ENCODE measurements at regions of chr11 and their contacts with region 1.

Region 1: GRCh38 chr11:125111343-125112207 is at the start of gene TMEM218:
- DNase-seq: peak; percentile 91 to 97 (median 95)
- H3K4me3 ChIP-seq: peak within 1 kb of the TSS; percentile 80
- H3K4me3 Mint-ChIP-seq: peak within 1 kb of the TSS; percentile 90 to 100 (median 94)
- H3K27ac ChIP-seq: peak within 1 kb of the TSS; percentile 74
- H3K27ac Mint-ChIP-seq: peak within 1 kb of the TSS; percentile 82 to 99 (median 96)
- H3K4me1 ChIP-seq: peaks cover 17% of the 10 kb centered on the region
- H3K4me1 Mint-ChIP-seq: peaks cover 21 to 38% (median 22%) of the 10 kb centered on the region in 3 donors
- H3K27me3 ChIP-seq: no peaks in the 10 kb centered on the region
- H3K27me3 Mint-ChIP-seq: peaks cover 2% of the 10 kb centered on the region in 2 donors
- total RNA-seq, gene TMEM218: 22.5 to 25.5 TPM

Region 2: GRCh38 chr11:125091247-125091876 is 20.2 kb before region 1 on chr11:
- CTCF ChIA-PET with region 1: interaction called, 17 read pairs
- POLR2A ChIA-PET with region 1: no interaction called
- DNase-seq: peak in 1 of 5 donors; percentile 13
- H3K4me3 ChIP-seq: no peak overlapping the region
- H3K4me3 Mint-ChIP-seq: no peak overlapping the region
- H3K27ac ChIP-seq: no peak overlapping the region
- H3K27ac Mint-ChIP-seq: peak overlapping the region in 2 of 8 donors; percentile 53 to 60
- H3K4me1 ChIP-seq: no peaks in the 10 kb centered on the region
- H3K4me1 Mint-ChIP-seq: no peaks in the 10 kb centered on the region
- H3K27me3 ChIP-seq: no peaks in the 10 kb centered on the region
- H3K27me3 Mint-ChIP-seq: no peaks in the 10 kb centered on the region